Natural killer cell (primary cell): ENCODE measurements at regions of chr22 and their contacts with region 1.

Region 1: GRCh38 chr22:41621099-41621910 is at the start of gene XRCC6:
- DNase-seq: peak; percentile 99 to 100
- ATAC-seq: peak; percentile 92 to 99 (median 92)
- H3K4me3 ChIP-seq: peak within 1 kb of the TSS; percentile 89
- H3K4me3 Mint-ChIP-seq: peak within 1 kb of the TSS; percentile 100
- H3K27ac ChIP-seq: peak within 1 kb of the TSS; percentile 96
- H3K27ac Mint-ChIP-seq: peak within 1 kb of the TSS; percentile 97 to 100
- H3K4me1 ChIP-seq: peaks cover 13% of the 10 kb centered on the region
- H3K4me1 Mint-ChIP-seq: peaks cover 21 to 26% of the 10 kb centered on the region in 2 donors
- H3K27me3 ChIP-seq: no peaks in the 10 kb centered on the region
- H3K27me3 Mint-ChIP-seq: no peaks in the 10 kb centered on the region
- CTCF ChIP-seq: no peak
- total RNA-seq, gene XRCC6: 134 to 142 (median 140) TPM

Region 2: GRCh38 chr22:41543854-41544670 is 77.2 kb before region 1 on chr22 and contains the start of gene POLR3H:
- intact Hi-C with region 1: loop called (anchors 1 kb)
- DNase-seq: peak; percentile 89 to 98
- ATAC-seq: peak; percentile 98 to 99 (median 98)
- H3K4me3 ChIP-seq: peak within 1 kb of the TSS; percentile 97
- H3K4me3 Mint-ChIP-seq: peak within 1 kb of the TSS; percentile 96
- H3K27ac ChIP-seq: peak within 1 kb of the TSS; percentile 78
- H3K27ac Mint-ChIP-seq: peak within 1 kb of the TSS; percentile 93 to 98
- H3K4me1 ChIP-seq: peaks cover 22% of the 10 kb centered on the region
- H3K4me1 Mint-ChIP-seq: peaks cover 26 to 36% of the 10 kb centered on the region in 2 donors
- H3K27me3 ChIP-seq: no peaks in the 10 kb centered on the region
- H3K27me3 Mint-ChIP-seq: peaks cover 0 to under 1% of the 10 kb centered on the region in 2 donors
- CTCF ChIP-seq: no peak
- total RNA-seq, gene POLR3H: 13.1 to 18.8 (median 16.2) TPM

Region 3: GRCh38 chr22:41589391-41590241 is 31.7 kb before region 1 on chr22 and contains the start of gene PMM1:
- intact Hi-C with region 1: loop called (anchors 1 kb)
- DNase-seq: peak; percentile 99 to 100
- ATAC-seq: peak; percentile 96 to 99 (median 97)
- H3K4me3 ChIP-seq: peak within 1 kb of the TSS; percentile 72
- H3K4me3 Mint-ChIP-seq: peak within 1 kb of the TSS; percentile 92
- H3K27ac ChIP-seq: peak within 1 kb of the TSS; percentile 42
- H3K27ac Mint-ChIP-seq: peak within 1 kb of the TSS; percentile 58 to 80
- H3K4me1 ChIP-seq: peaks cover 18% of the 10 kb centered on the region
- H3K4me1 Mint-ChIP-seq: peaks cover 8 to 10% of the 10 kb centered on the region in 2 donors
- H3K27me3 ChIP-seq: no peaks in the 10 kb centered on the region
- H3K27me3 Mint-ChIP-seq: peaks cover 0 to 7% of the 10 kb centered on the region in 2 donors
- CTCF ChIP-seq: no peak
- total RNA-seq, gene PMM1: 13.1 to 20.4 (median 16.4) TPM

Region 4: DNA sequence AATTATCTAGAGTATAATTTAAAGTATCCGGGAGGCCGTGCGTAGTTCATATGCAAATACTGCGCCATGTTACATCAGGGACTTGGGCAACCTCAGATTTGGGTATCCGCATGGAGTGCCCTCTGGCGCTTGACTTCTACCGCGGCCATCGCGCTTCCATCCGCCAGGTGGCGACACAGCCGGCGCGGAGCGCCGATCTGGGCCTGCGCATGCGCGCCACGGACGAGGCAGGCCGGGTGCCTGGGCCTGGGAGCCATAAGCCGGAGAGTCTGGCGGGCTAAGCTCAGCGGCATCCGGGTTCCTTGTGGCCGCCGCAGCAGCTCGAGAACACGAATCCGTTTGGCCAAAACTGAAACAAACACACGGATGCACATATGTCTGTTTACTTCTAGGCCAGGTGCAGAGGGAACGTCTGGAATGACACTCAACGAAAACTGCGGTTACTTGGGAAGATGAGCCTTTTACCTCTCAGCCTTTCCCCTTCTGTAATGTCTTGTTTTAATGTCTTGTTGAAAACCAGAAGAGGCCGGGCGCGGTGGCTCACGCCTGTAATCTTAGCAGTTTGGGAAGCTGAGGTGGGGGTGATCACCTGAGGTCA is 45.5 kb after region 1 on chr22:
- intact Hi-C with region 1: loop called (anchors 1 kb)
- DNase-seq: peak; percentile 94 to 98
- ATAC-seq: peak; percentile 94 to 98 (median 95)
- H3K4me3 ChIP-seq: peak overlapping the region; percentile 50
- H3K4me3 Mint-ChIP-seq: peak overlapping the region; percentile 88
- H3K27ac ChIP-seq: peak overlapping the region; percentile 92
- H3K27ac Mint-ChIP-seq: peak overlapping the region; percentile 92 to 93
- H3K4me1 ChIP-seq: peaks cover 14% of the 10 kb centered on the region
- H3K4me1 Mint-ChIP-seq: peaks cover 10 to 11% of the 10 kb centered on the region in 2 donors
- H3K27me3 ChIP-seq: no peaks in the 10 kb centered on the region
- H3K27me3 Mint-ChIP-seq: no peaks in the 10 kb centered on the region
- CTCF ChIP-seq: peak; percentile 99